ENCODE measurements at regions of chr17 and their contacts with region 1.

Region 1: GRCh38 chr17:27455914-27456680 is at the start of gene KSR1:
- DNase-seq: peak; percentile 88
- ATAC-seq: peak; percentile 94
- H3K4me3 Mint-ChIP-seq: peak within 1 kb of the TSS; percentile 95
- H3K27ac Mint-ChIP-seq: peak within 1 kb of the TSS; percentile 85
- H3K4me1 Mint-ChIP-seq: peaks cover 38% of the 10 kb centered on the region
- H3K27me3 Mint-ChIP-seq: no peaks in the 10 kb centered on the region
- total RNA-seq, gene KSR1: 57.0 to 60.2 TPM

Region 2: DNA sequence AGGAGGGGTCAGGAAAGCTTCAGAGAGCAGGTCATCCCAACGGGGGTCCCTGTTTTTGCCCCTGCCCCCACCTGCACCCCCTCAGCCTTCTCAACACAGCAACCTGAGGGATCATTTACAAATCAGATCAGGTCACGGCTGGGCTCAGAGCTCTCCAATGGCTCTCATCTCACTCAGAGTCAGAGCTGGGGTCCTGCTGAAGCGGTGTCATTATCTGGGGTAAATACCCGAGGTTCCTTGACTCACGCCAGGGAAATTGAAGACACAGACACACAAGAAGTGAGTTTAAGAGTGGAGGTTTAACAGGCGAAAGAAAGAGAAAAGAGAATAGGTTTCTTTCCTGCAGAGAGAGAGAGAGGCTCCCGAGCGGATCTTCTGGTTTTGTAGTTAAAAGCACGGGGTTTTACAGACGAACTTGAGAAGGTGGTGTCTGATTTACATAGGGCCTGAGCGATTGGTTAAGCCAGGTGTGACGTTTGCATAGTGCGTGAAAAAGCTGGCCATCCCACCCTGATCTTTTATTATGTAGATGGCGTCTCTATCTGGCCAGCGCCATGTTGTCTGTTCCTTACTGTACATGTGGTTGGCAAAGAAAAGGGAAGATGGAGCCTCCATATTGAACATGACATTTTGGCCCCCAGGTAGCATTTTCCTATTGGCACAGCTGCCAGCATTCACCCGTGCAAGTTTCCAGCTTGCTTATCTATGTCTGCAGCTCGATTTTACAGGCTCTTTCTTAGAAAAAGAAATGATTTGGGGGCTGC is 110.8 kb before region 1 on chr17:
- POLR2A ChIA-PET with region 1: no interaction called
- DNase-seq: no peak
- ATAC-seq: no peak
- H3K4me3 Mint-ChIP-seq: no peak overlapping the region
- H3K27ac Mint-ChIP-seq: no peak overlapping the region
- H3K4me1 Mint-ChIP-seq: peaks cover 22% of the 10 kb centered on the region
- H3K27me3 Mint-ChIP-seq: peaks cover 2% of the 10 kb centered on the region

Region 3: GRCh38 chr17:27466743-27467375 is 10.8 kb after region 1 on chr17:
- POLR2A ChIA-PET with region 1: interaction called, 47 read pairs
- DNase-seq: peak; percentile 68
- ATAC-seq: peak; percentile 83
- H3K4me3 Mint-ChIP-seq: peak overlapping the region; percentile 77
- H3K27ac Mint-ChIP-seq: peak overlapping the region; percentile 97
- H3K4me1 Mint-ChIP-seq: peaks cover 75% of the 10 kb centered on the region
- H3K27me3 Mint-ChIP-seq: no peaks in the 10 kb centered on the region

Region 4: GRCh38 chr17:27473748-27474609 is 17.9 kb after region 1 on chr17:
- POLR2A ChIA-PET with region 1: interaction called, 47 read pairs
- DNase-seq: peak; percentile 61
- ATAC-seq: peak; percentile 44
- H3K4me3 Mint-ChIP-seq: peak overlapping the region; percentile 67
- H3K27ac Mint-ChIP-seq: peak overlapping the region; percentile 99
- H3K4me1 Mint-ChIP-seq: peaks cover 82% of the 10 kb centered on the region
- H3K27me3 Mint-ChIP-seq: no peaks in the 10 kb centered on the region

Region 5: DNA sequence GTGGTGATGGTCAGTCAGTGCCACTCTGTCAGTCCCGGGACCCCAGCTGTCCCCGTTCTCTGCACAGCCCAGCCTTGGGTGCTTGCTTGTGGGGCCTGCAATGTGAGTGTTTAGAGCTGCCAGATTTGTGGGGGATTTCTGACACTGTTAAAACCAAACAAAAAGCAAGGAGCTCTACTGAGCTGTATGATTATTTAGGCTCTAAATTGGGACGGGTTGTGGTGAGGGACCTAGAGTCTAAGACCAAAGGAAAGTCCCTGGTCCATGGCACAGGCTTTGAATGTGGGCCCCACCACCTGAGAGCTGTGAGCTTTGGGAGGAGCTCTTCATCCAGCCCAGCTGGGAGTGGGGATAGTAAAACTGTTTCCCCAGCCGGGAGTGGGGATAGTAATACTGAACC is 63.5 kb after region 1 on chr17:
- POLR2A ChIA-PET with region 1: no interaction called
- DNase-seq: no peak
- ATAC-seq: no peak
- H3K4me3 Mint-ChIP-seq: no peak overlapping the region
- H3K27ac Mint-ChIP-seq: no peak overlapping the region
- H3K4me1 Mint-ChIP-seq: peaks cover 29% of the 10 kb centered on the region
- H3K27me3 Mint-ChIP-seq: no peaks in the 10 kb centered on the region

Region 6: DNA sequence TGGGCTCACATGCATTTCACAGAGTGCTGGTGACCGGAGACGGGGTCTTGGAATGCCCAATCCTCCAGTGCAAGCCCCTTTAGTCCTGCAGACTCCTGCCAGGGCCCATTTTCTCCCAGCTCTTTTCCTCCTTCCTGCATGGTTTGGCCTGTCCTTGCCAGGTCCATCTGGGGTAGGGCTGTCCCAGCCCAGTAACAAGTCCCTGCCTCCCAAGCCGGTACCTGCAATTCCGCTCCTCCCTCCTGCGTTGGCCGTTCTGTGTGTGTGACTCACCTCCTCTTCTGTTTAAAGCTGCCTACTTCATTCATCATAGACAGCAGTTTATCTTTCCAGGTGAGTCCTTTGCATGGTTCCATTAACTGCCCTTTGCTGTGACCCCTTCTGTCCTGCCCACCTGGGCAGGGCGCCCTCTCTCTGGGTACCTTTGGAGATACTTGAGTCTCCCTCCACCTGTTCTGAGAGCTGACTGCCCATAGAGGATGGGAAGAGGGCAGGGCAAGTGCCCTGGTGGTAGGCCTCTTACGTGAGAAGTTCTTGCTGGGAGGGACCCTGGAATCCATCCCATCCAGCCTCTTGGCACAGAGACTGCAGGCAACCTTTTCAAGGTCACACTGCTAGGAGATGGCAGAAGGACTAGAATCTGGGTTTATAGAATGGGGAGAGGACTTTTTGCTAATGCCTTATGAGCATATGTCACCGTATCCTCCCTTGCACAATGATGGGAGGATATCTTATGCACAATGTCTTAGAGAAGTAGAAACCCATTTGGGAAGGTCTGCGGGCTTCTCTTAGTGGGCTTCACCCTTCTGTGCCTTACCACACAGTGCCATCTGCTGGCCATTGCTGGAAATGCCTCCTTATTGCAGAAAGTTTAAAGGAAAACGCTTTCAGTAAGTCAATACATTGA is 145.2 kb after region 1 on chr17:
- POLR2A ChIA-PET with region 1: interaction called, 26 read pairs
- DNase-seq: peak; percentile 79
- ATAC-seq: peak; percentile 32
- H3K4me3 Mint-ChIP-seq: no peak overlapping the region
- H3K27ac Mint-ChIP-seq: no peak overlapping the region
- H3K4me1 Mint-ChIP-seq: peaks cover 14% of the 10 kb centered on the region
- H3K27me3 Mint-ChIP-seq: no peaks in the 10 kb centered on the region